Heart right ventricle (tissue), 16 donors: ENCODE measurements at regions of chr2 and their contacts with region 1.

Region 1: DNA sequence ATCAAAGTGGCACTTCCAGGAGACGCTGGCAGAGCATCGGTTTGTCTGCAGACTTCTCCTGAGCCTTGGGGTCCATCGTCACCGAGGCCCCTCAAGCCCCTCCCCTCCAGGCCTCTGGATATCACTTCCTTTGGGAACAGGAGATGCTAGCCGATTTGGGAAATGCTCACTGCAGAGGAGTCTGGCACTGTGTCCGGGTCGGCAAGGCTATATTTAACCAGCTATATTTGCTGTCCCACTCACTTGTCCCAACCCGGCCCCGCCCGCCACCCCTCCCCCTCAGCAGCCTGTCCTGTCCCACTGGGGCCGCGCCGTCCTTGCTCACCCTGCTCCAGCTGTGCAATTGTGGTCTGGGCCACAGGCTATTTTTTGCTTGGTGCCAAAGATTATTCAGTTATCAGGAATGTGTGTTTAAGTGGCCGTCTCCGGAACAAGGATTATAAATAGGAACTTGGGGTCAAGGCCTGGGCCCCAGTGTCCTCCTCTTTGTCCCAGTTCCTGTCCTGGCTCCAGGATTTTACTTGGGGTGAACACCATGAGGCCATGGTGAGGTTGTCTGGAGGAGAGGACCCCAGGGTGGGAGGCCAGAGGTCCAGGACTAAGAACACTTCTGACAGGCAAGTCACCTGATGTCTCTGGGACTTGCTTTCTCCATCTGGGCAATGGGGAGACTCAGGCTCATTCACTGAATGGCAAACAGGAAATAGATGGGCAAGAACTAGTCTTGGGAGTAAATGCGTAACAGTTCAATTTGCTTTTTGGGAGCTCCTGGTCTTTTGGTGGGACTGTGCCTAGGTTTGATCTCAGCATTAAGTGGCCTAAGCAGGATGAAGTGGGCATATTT is 263.6 kb downstream of the DYSF start:
- DNase-seq: peak; percentile 93 to 94
- ATAC-seq: peak; percentile 91 to 97 (median 96)
- H3K4me3 ChIP-seq: no peak overlapping the region
- H3K27ac ChIP-seq: peak overlapping the region in 9 of 10 donors; percentile 35 to 84 (median 55)
- H3K4me1 ChIP-seq: peaks cover 33 to 85% (median 60%) of the 10 kb centered on the region in 9 donors
- H3K27me3 ChIP-seq: no peaks in the 10 kb centered on the region
- CTCF ChIP-seq: no peak

Region 2: GRCh38 chr2:71614976-71615766 is 101.8 kb before region 1 on chr2:
- intact Hi-C with region 1: loop called in 1 of 10 experiments (anchors 5 kb)
- DNase-seq: peak; percentile 91
- ATAC-seq: peak; percentile 91 to 96 (median 94)
- H3K4me3 ChIP-seq: no peak overlapping the region
- H3K27ac ChIP-seq: peak overlapping the region; percentile 76 to 95 (median 90)
- H3K4me1 ChIP-seq: peaks cover 26 to 54% (median 43%) of the 10 kb centered on the region in 9 donors
- H3K27me3 ChIP-seq: no peaks in the 10 kb centered on the region
- CTCF ChIP-seq: no peak

Region 3: GRCh38 chr2:71882949-71883472 is 166.0 kb after region 1 on chr2:
- intact Hi-C with region 1: loop called in 1 of 10 experiments (anchors 10 kb)
- DNase-seq: peak; percentile 73 to 82
- ATAC-seq: peak; percentile 81 to 94 (median 90)
- H3K4me3 ChIP-seq: no peak overlapping the region
- H3K27ac ChIP-seq: peak overlapping the region in 5 of 10 donors; percentile 7 to 47 (median 16)
- H3K4me1 ChIP-seq: peaks cover 0 to 40% (median 25%) of the 10 kb centered on the region in 9 donors
- H3K27me3 ChIP-seq: no peaks in the 10 kb centered on the region
- CTCF ChIP-seq: no peak